Heart left ventricle (tissue), 16 donors: ENCODE measurements at regions of chr15 and their contacts with region 1.

Region 1: GRCh38 chr15:28086175-28086703 is 12.9 kb downstream of the OCA2 start:
- DNase-seq: peak in 2 of 5 donors; percentile 53 to 61
- ATAC-seq: peak; percentile 86 to 98 (median 96)
- H3K4me3 ChIP-seq: no peak overlapping the region
- H3K27ac ChIP-seq: no peak overlapping the region
- H3K4me1 ChIP-seq: peaks cover 0 to 8% (median 0%) of the 10 kb centered on the region in 12 donors
- H3K27me3 ChIP-seq: peaks cover 0 to 6% (median 0%) of the 10 kb centered on the region in 9 donors
- CTCF ChIP-seq: peak; percentile 59 to 76 (median 69)
- POLR2A ChIP-seq: no peak

Region 2: GRCh38 chr15:27912283-27912682 is 174.0 kb before region 1 on chr15:
- intact Hi-C with region 1: no loop called
- DNase-seq: no peak
- ATAC-seq: no peak
- H3K4me3 ChIP-seq: no peak overlapping the region
- H3K27ac ChIP-seq: no peak overlapping the region
- H3K4me1 ChIP-seq: no peaks in the 10 kb centered on the region
- H3K27me3 ChIP-seq: no peaks in the 10 kb centered on the region
- CTCF ChIP-seq: no peak
- POLR2A ChIP-seq: no peak

Region 3: DNA sequence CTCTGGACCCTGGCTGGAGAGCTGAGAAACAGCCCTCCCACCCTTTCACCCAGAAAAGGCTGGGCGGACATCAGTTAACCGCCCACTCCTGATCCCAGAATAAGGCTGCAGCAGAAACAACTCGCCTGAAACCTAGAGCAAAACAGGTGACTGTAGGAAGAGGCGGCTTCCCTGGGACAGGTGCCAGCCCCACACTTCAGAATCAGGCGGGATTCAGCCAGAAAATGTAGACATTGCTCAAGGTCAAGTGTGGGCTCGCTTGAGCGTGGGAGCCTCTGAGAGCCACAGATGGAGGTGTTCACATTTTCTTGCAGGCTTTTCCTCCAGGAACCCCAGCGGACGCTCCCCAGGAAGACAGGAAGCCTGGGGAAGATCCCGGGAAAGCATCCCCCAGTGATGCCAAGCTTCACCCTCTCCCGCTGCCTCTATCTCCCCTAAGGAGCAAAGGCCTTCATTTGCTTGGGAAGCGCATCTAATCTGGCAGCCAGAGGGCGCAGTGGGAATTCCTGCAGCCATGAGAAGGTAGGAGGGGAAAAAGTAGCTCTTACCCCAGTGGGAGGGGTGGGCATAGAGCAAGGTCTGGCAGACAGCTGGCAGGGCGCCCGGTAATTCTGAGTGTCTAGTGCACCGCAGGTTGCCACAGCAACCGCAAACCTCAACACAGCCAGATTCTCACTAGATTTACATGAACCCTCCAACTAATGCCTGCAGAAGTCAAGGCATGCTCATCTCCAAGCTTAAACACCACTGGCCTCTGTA is 64.8 kb before region 1 on chr15:
- intact Hi-C with region 1: loop called in 1 of 10 experiments (anchors 10 kb)
- DNase-seq: peak in 3 of 5 donors; percentile 34 to 61 (median 37)
- ATAC-seq: peak in 3 of 4 donors; percentile 18 to 51 (median 33)
- H3K4me3 ChIP-seq: no peak overlapping the region
- H3K27ac ChIP-seq: no peak overlapping the region
- H3K4me1 ChIP-seq: no peaks in the 10 kb centered on the region
- H3K27me3 ChIP-seq: no peaks in the 10 kb centered on the region
- CTCF ChIP-seq: peak; percentile 19 to 62 (median 45)
- POLR2A ChIP-seq: no peak

Region 4: GRCh38 chr15:28123408-28124023 is 37.3 kb after region 1 on chr15:
- intact Hi-C with region 1: loop called in 6 of 10 experiments (anchors 1 to 5 kb)
- DNase-seq: peak; percentile 46 to 72 (median 60)
- ATAC-seq: peak in 3 of 4 donors; percentile 38 to 67 (median 56)
- H3K4me3 ChIP-seq: no peak overlapping the region
- H3K27ac ChIP-seq: no peak overlapping the region
- H3K4me1 ChIP-seq: peaks cover 0 to 10% (median 0%) of the 10 kb centered on the region in 12 donors
- H3K27me3 ChIP-seq: no peaks in the 10 kb centered on the region
- CTCF ChIP-seq: peak; percentile 35 to 72 (median 64)
- POLR2A ChIP-seq: no peak

Region 5: DNA sequence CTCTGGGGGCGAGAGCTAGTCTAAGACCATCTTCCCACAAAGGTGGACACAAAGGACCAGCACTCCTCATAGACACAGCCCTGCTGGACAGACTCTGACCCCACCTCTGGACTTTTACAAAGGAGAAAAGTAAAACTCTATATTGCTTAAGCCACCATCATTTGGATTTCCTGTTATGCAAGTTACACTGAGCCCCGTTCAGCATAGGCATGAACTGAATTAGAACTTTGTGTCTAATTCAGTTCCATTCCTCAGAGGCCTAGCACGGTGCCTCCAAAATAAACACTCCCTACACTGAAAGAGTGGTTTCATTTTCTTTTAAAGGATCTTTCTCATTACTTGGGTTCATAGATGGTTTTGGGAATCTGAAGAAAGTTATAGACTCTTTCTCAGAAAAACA is 92.1 kb after region 1 on chr15:
- intact Hi-C with region 1: no loop called
- DNase-seq: no peak
- ATAC-seq: peak in 3 of 4 donors; percentile 25 to 40 (median 35)
- H3K4me3 ChIP-seq: no peak overlapping the region
- H3K27ac ChIP-seq: peak overlapping the region in 5 of 12 donors; percentile 2 to 53 (median 15)
- H3K4me1 ChIP-seq: peaks cover 0 to 9% (median 0%) of the 10 kb centered on the region in 12 donors
- H3K27me3 ChIP-seq: no peaks in the 10 kb centered on the region
- CTCF ChIP-seq: no peak
- POLR2A ChIP-seq: no peak